Activated B cell treated with CpG ODN at 0.5 μM for 24 hours (primary cell): ENCODE measurements at regions of chr13 and their contacts with region 1.

Region 1: GRCh38 chr13:30865123-30866049 is 40.7 kb upstream of the MEDAG start:
- DNase-seq: peak; percentile 29
- ATAC-seq: peak; percentile 96
- H3K4me3 Mint-ChIP-seq: no peak overlapping the region
- H3K27ac Mint-ChIP-seq: no peak overlapping the region
- H3K4me1 Mint-ChIP-seq: peaks cover 1% of the 10 kb centered on the region
- H3K27me3 Mint-ChIP-seq: peaks cover 13% of the 10 kb centered on the region
- CTCF ChIP-seq: peak; percentile 66

Region 2: DNA sequence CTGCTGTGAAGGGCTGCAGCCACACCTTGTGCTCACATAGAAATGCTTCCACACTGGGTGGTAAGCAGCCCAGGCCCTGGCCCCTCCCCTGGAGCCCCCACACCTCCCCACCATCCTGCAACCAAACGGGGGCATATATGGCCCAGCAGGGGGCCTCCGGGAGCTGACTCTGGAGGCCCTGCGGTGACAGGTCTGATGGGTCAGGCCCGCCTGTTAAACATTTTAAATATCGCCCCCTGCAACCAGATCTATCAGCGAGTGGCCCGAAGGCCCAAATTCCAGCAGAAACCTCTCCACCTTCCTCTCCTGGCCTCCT is 510.0 kb before region 1 on chr13:
- CTCF ChIA-PET with region 1: no interaction called
- POLR2A ChIA-PET with region 1: no interaction called
- intact Hi-C with region 1: loop called (anchors 1 kb)
- DNase-seq: peak; percentile 61
- ATAC-seq: peak; percentile 100
- H3K4me3 Mint-ChIP-seq: peak overlapping the region; percentile 45
- H3K27ac Mint-ChIP-seq: peak overlapping the region; percentile 77
- H3K4me1 Mint-ChIP-seq: peaks cover 32% of the 10 kb centered on the region
- H3K27me3 Mint-ChIP-seq: no peaks in the 10 kb centered on the region
- CTCF ChIP-seq: no peak

Region 3: GRCh38 chr13:30679483-30680330 is 185.7 kb before region 1 on chr13:
- CTCF ChIA-PET with region 1: no interaction called
- POLR2A ChIA-PET with region 1: no interaction called
- intact Hi-C with region 1: loop called (anchors 1 kb)
- DNase-seq: no peak
- ATAC-seq: peak; percentile 96
- H3K4me3 Mint-ChIP-seq: no peak overlapping the region
- H3K27ac Mint-ChIP-seq: peak overlapping the region; percentile 20
- H3K4me1 Mint-ChIP-seq: peaks cover 15% of the 10 kb centered on the region
- H3K27me3 Mint-ChIP-seq: no peaks in the 10 kb centered on the region
- CTCF ChIP-seq: no peak

Region 4: GRCh38 chr13:31380715-31381114 is 515.3 kb after region 1 on chr13:
- CTCF ChIA-PET with region 1: no interaction called
- POLR2A ChIA-PET with region 1: no interaction called
- intact Hi-C with region 1: no loop called
- DNase-seq: no peak
- ATAC-seq: no peak
- H3K4me3 Mint-ChIP-seq: no peak overlapping the region
- H3K27ac Mint-ChIP-seq: no peak overlapping the region
- H3K4me1 Mint-ChIP-seq: peaks cover 25% of the 10 kb centered on the region
- H3K27me3 Mint-ChIP-seq: no peaks in the 10 kb centered on the region
- CTCF ChIP-seq: no peak

Region 5: DNA sequence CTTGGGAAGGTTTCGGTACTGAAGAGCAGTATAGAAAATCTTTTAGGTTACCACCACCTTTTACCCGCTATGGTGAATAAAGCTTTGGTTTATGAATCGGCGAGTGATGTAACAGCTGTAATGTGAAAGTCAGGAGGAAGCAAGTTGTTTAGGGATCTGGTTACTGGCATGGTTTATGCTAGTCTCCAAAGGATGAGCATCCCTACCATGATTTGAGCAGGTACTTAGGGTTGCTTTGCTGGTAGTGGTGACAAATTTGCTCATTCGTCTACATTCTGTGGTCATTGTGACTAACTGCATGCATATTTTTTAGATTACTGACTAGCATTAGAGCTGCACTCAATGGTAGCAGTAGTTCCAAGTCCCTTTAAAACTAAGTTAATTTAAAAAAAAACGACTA is 1270.3 kb after region 1 on chr13:
- CTCF ChIA-PET with region 1: no interaction called
- POLR2A ChIA-PET with region 1: no interaction called
- intact Hi-C with region 1: no loop called
- DNase-seq: no peak
- ATAC-seq: no peak
- H3K4me3 Mint-ChIP-seq: no peak overlapping the region
- H3K27ac Mint-ChIP-seq: no peak overlapping the region
- H3K4me1 Mint-ChIP-seq: no peaks in the 10 kb centered on the region
- H3K27me3 Mint-ChIP-seq: no peaks in the 10 kb centered on the region
- CTCF ChIP-seq: no peak